Activated CD4-positive, alpha-beta memory T cell treated with anti-CD3 and anti-CD28 coated beads for 36 hours (primary cell): ENCODE measurements at regions of chr16 and their contacts with region 1.

Region 1: DNA sequence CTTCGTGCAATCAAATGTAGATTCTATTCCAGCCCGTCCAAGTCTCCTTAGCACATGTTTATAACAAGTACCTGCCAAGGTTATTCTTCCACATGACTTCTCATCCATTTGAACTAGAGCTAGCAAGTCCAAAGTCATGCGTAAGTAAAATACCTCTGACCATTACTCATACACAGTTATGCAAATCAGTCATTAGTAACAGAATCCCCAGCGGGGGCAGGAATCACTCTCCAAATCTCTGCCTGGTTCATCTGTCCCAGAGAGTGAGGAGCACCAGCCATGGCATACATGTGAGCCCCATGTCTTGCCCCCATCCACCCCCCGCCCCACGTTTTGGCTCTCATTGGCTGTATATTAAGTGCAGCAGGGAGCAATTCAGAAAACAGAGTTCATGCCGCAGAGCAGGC is 27.7 kb downstream of the SRL start:
- DNase-seq: no peak
- H3K4me3 Mint-ChIP-seq: no peak overlapping the region
- H3K27ac Mint-ChIP-seq: no peak overlapping the region
- H3K4me1 Mint-ChIP-seq: no peaks in the 10 kb centered on the region
- H3K27me3 Mint-ChIP-seq: peaks cover 4% of the 10 kb centered on the region

Region 2: DNA sequence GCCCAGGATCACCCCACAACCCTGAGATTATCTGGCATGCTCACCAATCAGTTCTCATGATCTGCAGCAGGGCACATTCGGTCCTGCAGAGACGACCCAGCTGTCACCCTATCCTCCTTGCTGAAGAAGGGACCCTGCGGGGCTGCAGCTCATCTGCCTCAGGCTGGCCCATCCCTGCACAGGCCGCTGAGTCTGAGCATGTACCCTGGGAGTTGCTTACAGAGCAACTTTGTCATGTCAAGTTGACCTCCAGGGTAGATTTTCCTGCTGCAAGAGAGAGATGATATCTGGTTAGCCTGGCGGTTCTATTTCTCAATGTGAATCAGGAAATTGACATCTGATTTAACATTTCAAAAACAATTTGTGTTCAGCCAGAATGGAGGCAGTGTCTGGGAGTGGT is 62.0 kb before region 1 on chr16:
- CTCF ChIA-PET with region 1: no interaction called
- POLR2A ChIA-PET with region 1: no interaction called
- intact Hi-C with region 1: loop called (anchors 10 kb)
- DNase-seq: no peak
- H3K4me3 Mint-ChIP-seq: no peak overlapping the region
- H3K27ac Mint-ChIP-seq: no peak overlapping the region
- H3K4me1 Mint-ChIP-seq: no peaks in the 10 kb centered on the region
- H3K27me3 Mint-ChIP-seq: no peaks in the 10 kb centered on the region

Region 3: DNA sequence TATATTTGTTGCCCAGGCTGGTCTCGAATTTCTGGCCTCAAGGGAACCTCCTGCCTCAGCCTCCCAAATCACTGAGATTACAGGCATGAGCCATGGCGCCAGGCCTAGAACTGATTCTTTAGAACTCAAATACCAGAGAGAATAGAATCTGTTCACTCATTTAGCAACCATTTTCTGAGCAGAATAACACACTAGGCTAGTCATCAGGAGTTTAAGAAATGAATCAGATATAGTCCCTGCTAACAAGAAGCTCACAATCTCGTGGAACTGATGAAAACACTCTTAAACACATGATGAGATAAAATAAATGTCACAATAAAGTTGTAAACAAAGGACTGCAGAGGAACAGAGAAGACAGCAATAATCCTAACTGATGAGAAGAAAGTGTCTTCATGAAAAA is 42.1 kb before region 1 on chr16:
- CTCF ChIA-PET with region 1: no interaction called
- POLR2A ChIA-PET with region 1: no interaction called
- intact Hi-C with region 1: no loop called
- DNase-seq: peak; percentile 39
- H3K4me3 Mint-ChIP-seq: no peak overlapping the region
- H3K27ac Mint-ChIP-seq: no peak overlapping the region
- H3K4me1 Mint-ChIP-seq: peaks cover 9% of the 10 kb centered on the region
- H3K27me3 Mint-ChIP-seq: no peaks in the 10 kb centered on the region